ENCODE measurements at regions of chr5 and their contacts with region 1.

Region 1: DNA sequence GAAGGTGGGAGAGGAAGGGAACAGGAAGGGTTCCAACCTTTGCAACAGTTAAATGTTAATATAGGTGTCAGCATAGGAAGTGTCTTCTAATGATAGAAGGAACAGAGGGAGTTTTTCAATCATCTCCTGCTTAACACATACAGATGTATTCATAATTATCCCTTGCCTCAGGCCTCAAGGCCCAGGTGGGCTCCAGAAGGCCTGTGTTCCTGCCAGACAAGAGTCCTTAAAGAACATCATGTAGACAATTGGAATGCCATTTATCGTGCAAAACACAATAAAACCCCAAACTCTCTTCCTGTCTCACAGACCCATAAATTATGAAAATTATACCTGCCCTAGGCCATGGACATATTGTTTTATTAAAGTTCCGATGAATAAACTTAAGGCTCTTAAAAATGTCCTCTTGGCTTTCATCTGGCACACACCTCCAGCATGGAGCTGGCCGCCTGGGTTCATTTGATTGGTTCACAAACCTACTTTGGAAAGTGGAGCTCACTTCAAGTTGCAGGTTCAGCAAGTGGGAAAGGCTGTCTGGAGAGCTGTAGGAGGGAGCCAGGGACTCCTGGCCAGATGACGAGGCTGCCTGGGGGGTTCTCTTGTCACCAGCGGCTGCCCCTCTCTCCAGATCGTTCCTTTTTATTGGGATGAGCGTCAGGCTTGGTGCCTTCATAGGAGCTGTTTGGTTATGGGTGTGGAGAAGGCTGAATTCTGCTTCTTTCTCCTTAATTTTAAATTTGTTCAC is 17.5 kb downstream of the SPRY4 start:
- DNase-seq: no peak
- ATAC-seq: no peak

Region 2: GRCh38 chr5:142339781-142340180 is 32.5 kb after region 1 on chr5:
- intact Hi-C with region 1: loop called (anchors 1 kb)
- DNase-seq: no peak
- ATAC-seq: no peak